Left colon (tissue), 2 donors: ENCODE measurements at regions of chr15 and their contacts with region 1.

Region 1: GRCh38 chr15:82540055-82540983 is at the start of gene RPS17:
- DNase-seq: peak; percentile 94 to 97
- ATAC-seq: peak; percentile 93
- total RNA-seq, gene RPS17: 950 to 981 TPM

Region 2: GRCh38 chr15:82613747-82614146 is 73.4 kb after region 1 on chr15:
- intact Hi-C with region 1: no loop called
- DNase-seq: no peak
- ATAC-seq: no peak

Region 3: DNA sequence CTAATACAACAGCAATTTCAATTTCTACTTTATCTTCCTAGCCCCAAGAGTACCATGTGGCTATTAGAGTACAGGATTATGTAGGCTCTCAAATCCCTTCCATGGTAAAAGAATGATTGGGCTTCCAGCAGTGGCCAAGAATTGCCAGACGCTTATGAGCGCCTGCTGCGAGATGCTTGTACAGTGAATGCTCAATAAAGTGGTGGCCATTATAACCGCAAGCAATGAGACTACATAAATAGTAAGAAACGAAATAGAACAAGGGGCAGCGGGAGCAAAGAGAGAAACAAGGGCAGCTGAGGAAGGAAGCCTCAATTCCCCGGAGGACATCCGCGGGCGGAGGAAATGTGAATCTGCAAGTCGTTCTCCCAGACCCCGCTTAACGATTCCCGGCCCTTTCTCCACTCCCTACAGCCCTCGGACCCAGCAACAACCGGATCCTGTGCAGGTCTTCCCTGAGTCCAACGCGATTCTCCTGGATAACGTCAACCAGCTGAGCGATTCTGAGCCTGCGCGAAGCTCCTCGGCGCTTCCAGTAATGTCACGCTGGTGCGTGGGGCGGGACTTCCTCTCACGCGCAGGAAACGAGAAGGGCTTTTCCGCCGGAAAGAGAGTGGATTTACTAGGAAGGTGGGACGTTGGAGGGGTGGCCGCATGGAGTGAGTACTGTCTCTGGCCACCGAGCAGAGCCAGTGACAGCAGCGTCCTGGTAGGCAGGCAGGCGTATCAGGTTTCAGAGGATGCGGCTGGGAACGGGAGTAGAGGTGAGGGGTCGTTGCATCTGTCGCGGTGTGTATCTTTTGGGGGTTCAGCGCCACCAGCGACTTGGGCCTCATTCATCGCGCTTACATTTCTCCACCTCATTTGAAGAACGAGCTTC is 209.9 kb after region 1 on chr15:
- intact Hi-C with region 1: loop called in 1 of 2 experiments (anchors 10 kb)
- DNase-seq: peak; percentile 93 to 94
- ATAC-seq: peak; percentile 99